K562 (cell line): ENCODE measurements at regions of chr7 and their contacts with region 1.

Region 1: DNA sequence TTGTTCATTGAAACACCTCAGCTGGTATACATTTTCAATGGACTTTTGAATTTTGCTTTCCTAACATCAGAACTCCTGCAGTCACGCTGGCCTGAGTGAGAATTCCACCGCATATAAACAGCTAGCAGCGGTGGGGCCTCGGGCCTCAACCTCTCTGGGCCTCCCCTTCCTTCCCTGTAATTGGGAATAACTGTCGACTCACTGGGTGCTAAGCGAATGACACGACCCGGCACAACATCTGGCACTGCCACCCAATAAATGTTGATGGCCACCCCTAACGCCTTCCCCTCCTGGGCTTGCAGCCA is 672 bp downstream of the RCC1L start:
- DNase-seq: no peak
- ATAC-seq: peak; percentile 19
- H3K4me3 ChIP-seq: peak overlapping the region; percentile 97
- H3K27ac ChIP-seq: peak overlapping the region; percentile 83
- H3K4me1 ChIP-seq: peaks cover 3 to 10% of the 10 kb centered on the region in 2 experiments; a peak in 3 of 5 replicates
- H3K27me3 ChIP-seq: no peaks in the 10 kb centered on the region
- CTCF ChIP-seq: no peak
- EP300 ChIP-seq: no peak
- POLR2A ChIP-seq: no peak
- RAD21 ChIP-seq: no peak

Region 2: GRCh38 chr7:74527842-74528241 is 545.1 kb before region 1 on chr7:
- CTCF ChIA-PET with region 1: no interaction called
- POLR2A ChIA-PET with region 1: no interaction called
- in situ Hi-C with region 1: no loop called
- intact Hi-C with region 1: no loop called
- DNase-seq: no peak
- ATAC-seq: no peak
- H3K4me3 ChIP-seq: no peak overlapping the region
- H3K27ac ChIP-seq: no peak overlapping the region
- H3K4me1 ChIP-seq: peaks cover 0 to 6% of the 10 kb centered on the region in 2 experiments; a peak in 1 of 5 replicates
- H3K27me3 ChIP-seq: no peaks in the 10 kb centered on the region
- CTCF ChIP-seq: no peak
- EP300 ChIP-seq: no peak
- POLR2A ChIP-seq: no peak
- RAD21 ChIP-seq: no peak

Region 3: DNA sequence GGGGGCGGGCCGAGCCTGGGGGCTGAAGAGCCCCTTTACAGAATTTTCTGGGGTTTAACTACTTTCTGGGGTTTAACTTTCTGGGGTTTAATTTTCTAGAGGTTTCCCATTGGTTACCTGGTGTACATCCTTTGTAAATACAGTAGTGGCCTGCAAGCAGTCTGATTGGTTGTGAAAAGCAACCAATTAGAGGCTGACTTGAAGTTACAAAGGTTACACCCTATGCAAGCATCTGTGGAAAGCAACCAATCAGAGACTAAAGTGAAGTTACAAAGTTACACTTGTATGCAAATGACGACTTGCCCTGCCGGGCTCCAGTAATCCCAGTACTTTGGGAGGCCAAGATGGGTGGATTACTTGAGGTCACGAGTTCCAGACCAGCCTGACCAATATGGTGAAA is 388.0 kb before region 1 on chr7:
- CTCF ChIA-PET with region 1: no interaction called
- POLR2A ChIA-PET with region 1: no interaction called
- in situ Hi-C with region 1: loop called (anchors 25 kb)
- intact Hi-C with region 1: no loop called
- DNase-seq: no peak
- ATAC-seq: peak; percentile 57
- H3K4me3 ChIP-seq: no peak overlapping the region
- H3K27ac ChIP-seq: no peak overlapping the region
- H3K4me1 ChIP-seq: peaks cover 4 to 9% of the 10 kb centered on the region in 2 experiments; a peak in 4 of 5 replicates
- H3K27me3 ChIP-seq: no peaks in the 10 kb centered on the region
- CTCF ChIP-seq: no peak
- EP300 ChIP-seq: no peak
- POLR2A ChIP-seq: no peak
- RAD21 ChIP-seq: no peak

Region 4: GRCh38 chr7:75762314-75762917 is 689.5 kb after region 1 on chr7:
- CTCF ChIA-PET with region 1: no interaction called
- POLR2A ChIA-PET with region 1: no interaction called
- in situ Hi-C with region 1: no loop called
- intact Hi-C with region 1: loop called (anchors 10 kb)
- DNase-seq: peak; percentile 65 to 82 (median 68)
- ATAC-seq: peak; percentile 94
- H3K4me3 ChIP-seq: no peak overlapping the region
- H3K27ac ChIP-seq: no peak overlapping the region
- H3K4me1 ChIP-seq: peaks cover 0 to 6% of the 10 kb centered on the region in 2 experiments; a peak in 3 of 5 replicates
- H3K27me3 ChIP-seq: no peaks in the 10 kb centered on the region
- CTCF ChIP-seq: peak; percentile 72 to 90 (median 86)
- EP300 ChIP-seq: no peak
- POLR2A ChIP-seq: no peak
- RAD21 ChIP-seq: peak; percentile 96 to 98